T-cell (primary cell): ENCODE measurements at regions of chr2 and their contacts with region 1.

Region 1: GRCh38 chr2:174577967-174578589 is 19.5 kb downstream of the WIPF1 start:
- DNase-seq: peak in 34 of 35 experiments; percentile 35 to 82 (median 62)
- ATAC-seq: peak; percentile 67 to 78 (median 73)
- H3K4me3 ChIP-seq: no peak overlapping the region
- H3K4me3 Mint-ChIP-seq: no peak overlapping the region
- H3K27ac ChIP-seq: peak overlapping the region; percentile 16
- H3K27ac Mint-ChIP-seq: peak overlapping the region; percentile 59 to 68
- H3K4me1 ChIP-seq: peaks cover 3 to 48% of the 10 kb centered on the region in 2 experiments
- H3K4me1 Mint-ChIP-seq: peaks cover 76 to 83% (median 83%) of the 10 kb centered on the region in 3 donors
- H3K27me3 ChIP-seq: no peaks in the 10 kb centered on the region
- H3K27me3 Mint-ChIP-seq: no peaks in the 10 kb centered on the region

Region 2: DNA sequence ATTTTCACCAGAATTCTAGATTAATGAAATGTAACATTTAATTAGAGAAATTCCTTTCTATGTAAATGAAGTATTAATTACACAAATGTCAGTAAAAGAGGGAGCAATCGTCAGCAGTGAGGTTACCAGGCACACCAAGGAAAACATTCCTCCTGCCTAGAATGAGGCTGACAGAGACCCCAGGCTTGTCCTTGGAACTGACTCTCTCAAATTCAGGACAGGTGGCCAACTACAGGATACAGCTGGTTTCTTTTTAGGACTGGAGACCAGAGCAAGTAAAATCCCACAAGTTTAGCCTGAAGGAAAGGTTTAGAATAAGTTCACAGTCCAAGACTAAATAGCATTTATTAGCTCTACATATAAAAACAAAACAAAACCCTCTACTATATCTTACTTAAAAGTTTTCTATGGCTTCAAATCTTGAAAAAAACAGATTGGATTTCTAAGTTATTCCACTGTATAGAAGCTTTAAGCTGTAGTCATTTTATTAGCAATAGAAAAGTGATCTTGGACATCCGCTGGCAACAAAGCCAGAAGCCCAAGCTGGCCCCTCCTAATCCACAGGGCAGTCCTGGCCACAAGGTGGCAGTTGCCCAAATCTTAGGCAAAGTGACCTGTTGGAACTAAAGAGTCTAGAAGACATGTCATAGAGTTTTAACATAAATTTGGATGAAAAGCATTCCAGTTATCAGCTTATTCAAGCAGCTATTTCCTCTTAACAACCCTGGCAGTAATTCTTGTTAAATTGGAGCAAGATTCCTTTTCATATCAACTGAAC is 693.9 kb before region 1 on chr2:
- CTCF ChIA-PET with region 1: no interaction called
- POLR2A ChIA-PET with region 1: no interaction called
- DNase-seq: peak in 23 of 35 experiments; percentile 2 to 53 (median 20)
- ATAC-seq: peak in 1 of 4 experiments; percentile 40
- H3K4me3 ChIP-seq: no peak overlapping the region
- H3K4me3 Mint-ChIP-seq: no peak overlapping the region
- H3K27ac ChIP-seq: no peak overlapping the region
- H3K27ac Mint-ChIP-seq: no peak overlapping the region
- H3K4me1 ChIP-seq: no peaks in the 10 kb centered on the region
- H3K4me1 Mint-ChIP-seq: peaks cover 0 to 2% (median 0%) of the 10 kb centered on the region in 3 donors
- H3K27me3 ChIP-seq: peaks cover 0 to 4% of the 10 kb centered on the region in 2 experiments
- H3K27me3 Mint-ChIP-seq: peaks cover 18 to 23% of the 10 kb centered on the region in 2 donors

Region 3: DNA sequence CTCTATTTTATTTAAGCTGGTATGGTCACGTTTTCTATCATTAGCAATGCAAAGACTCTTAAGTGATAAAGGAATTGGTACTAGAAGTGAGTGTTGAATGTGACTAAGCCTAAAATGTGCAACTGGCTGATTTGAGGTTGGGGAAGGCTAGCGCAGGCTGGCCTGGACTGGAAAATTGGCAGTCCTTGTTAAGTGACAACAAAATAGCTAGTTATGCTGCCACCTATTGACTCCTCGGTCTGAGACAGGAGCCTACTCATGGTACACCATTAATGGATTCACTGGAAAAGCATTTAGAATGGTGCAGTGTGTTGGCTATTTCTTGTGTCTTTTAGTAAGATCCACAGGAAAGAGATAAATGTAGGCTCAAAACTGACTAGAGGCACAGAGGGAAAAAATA is 25.2 kb after region 1 on chr2:
- CTCF ChIA-PET with region 1: interaction called, 7 to 298 read pairs
- POLR2A ChIA-PET with region 1: interaction called, 5 to 13 read pairs
- DNase-seq: peak in 33 of 35 experiments; percentile 15 to 81 (median 41)
- ATAC-seq: peak; percentile 65 to 74 (median 70)
- H3K4me3 ChIP-seq: no peak overlapping the region
- H3K4me3 Mint-ChIP-seq: peak overlapping the region in 1 of 3 donors; percentile 15
- H3K27ac ChIP-seq: peak overlapping the region; percentile 89
- H3K27ac Mint-ChIP-seq: peak overlapping the region; percentile 91 to 93
- H3K4me1 ChIP-seq: peaks cover 50 to 69% of the 10 kb centered on the region in 2 experiments
- H3K4me1 Mint-ChIP-seq: peaks cover 88 to 98% (median 90%) of the 10 kb centered on the region in 3 donors
- H3K27me3 ChIP-seq: no peaks in the 10 kb centered on the region
- H3K27me3 Mint-ChIP-seq: no peaks in the 10 kb centered on the region

Region 4: DNA sequence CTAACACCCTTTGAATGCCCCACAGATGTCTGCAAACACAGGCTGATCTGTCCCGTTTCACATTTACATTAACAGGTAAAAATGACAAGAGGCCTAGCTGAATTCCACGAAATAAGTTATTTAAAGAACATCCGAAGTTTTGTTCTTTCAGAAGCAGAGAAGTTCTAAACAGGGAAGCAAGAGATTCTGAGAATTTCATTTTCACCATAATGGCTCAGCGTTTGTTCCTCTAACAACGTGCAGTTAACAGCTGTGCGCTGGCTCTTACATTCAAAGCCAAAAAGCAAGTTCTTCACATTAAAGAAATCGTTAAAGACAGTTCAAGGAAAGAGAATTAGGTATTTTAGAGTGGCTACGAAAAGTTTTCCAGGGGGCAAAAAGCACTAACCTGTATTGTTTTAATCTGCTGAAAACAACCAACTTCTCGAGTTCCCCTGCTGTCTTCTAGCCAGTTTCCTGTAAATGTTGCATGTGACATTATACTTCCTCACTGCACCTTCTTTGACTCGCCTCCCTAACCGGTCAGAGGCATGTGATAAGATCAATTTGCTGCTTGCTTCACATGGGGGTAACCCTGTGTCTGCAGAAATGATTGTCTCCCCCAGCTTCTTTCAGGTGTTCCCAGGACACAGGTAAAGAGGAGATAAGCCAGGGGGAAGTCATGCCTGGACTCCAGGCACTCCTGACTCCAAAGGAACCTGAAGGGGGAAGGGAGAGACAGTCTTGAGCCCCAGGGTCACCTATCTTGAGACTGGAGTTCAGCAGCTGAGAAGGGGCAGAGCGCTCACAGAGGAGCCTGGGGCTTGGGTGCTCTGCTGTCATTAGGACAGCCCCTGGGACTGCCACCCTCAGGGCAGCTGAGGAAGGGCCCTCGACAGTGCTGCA is 56.3 kb after region 1 on chr2:
- CTCF ChIA-PET with region 1: interaction called, 3 to 14 read pairs
- POLR2A ChIA-PET with region 1: no interaction called
- DNase-seq: peak in 33 of 35 experiments; percentile 12 to 75 (median 34)
- ATAC-seq: peak; percentile 73 to 83 (median 77)
- H3K4me3 ChIP-seq: peak overlapping the region; percentile 66 to 81
- H3K4me3 Mint-ChIP-seq: peak overlapping the region; percentile 87 to 93 (median 89)
- H3K27ac ChIP-seq: peak overlapping the region; percentile 94
- H3K27ac Mint-ChIP-seq: peak overlapping the region; percentile 93 to 99
- H3K4me1 ChIP-seq: peaks cover 30 to 46% of the 10 kb centered on the region in 2 experiments
- H3K4me1 Mint-ChIP-seq: peaks cover 60 to 83% (median 75%) of the 10 kb centered on the region in 3 donors
- H3K27me3 ChIP-seq: no peaks in the 10 kb centered on the region
- H3K27me3 Mint-ChIP-seq: no peaks in the 10 kb centered on the region

Region 5: GRCh38 chr2:174682578-174683391 is 104.7 kb after region 1 on chr2:
- CTCF ChIA-PET with region 1: interaction called, 54 to 55 read pairs
- POLR2A ChIA-PET with region 1: interaction called, 3 to 4 read pairs
- DNase-seq: peak; percentile 28 to 78 (median 53)
- ATAC-seq: peak; percentile 76 to 80 (median 79)
- H3K4me3 ChIP-seq: peak overlapping the region; percentile 72 to 81
- H3K4me3 Mint-ChIP-seq: peak overlapping the region; percentile 85 to 96 (median 92)
- H3K27ac ChIP-seq: peak overlapping the region; percentile 25
- H3K27ac Mint-ChIP-seq: peak overlapping the region; percentile 90 to 92
- H3K4me1 ChIP-seq: peaks cover 0 to 18% of the 10 kb centered on the region in 2 experiments
- H3K4me1 Mint-ChIP-seq: peaks cover 54 to 57% (median 55%) of the 10 kb centered on the region in 3 donors
- H3K27me3 ChIP-seq: no peaks in the 10 kb centered on the region
- H3K27me3 Mint-ChIP-seq: no peaks in the 10 kb centered on the region

Region 6: GRCh38 chr2:174688079-174688478 is 110.0 kb after region 1 on chr2:
- CTCF ChIA-PET with region 1: interaction called, 54 to 55 read pairs
- POLR2A ChIA-PET with region 1: interaction called in 1 of 2 experiments, 3 read pairs
- DNase-seq: peak in 1 of 35 experiments; percentile 68
- ATAC-seq: peak; percentile 50 to 62 (median 60)
- H3K4me3 ChIP-seq: no peak overlapping the region
- H3K4me3 Mint-ChIP-seq: no peak overlapping the region
- H3K27ac ChIP-seq: no peak overlapping the region
- H3K27ac Mint-ChIP-seq: peak overlapping the region; percentile 56 to 73
- H3K4me1 ChIP-seq: peaks cover 0 to 5% of the 10 kb centered on the region in 2 experiments
- H3K4me1 Mint-ChIP-seq: peaks cover 24 to 29% (median 26%) of the 10 kb centered on the region in 3 donors
- H3K27me3 ChIP-seq: peaks cover 0 to 8% of the 10 kb centered on the region in 2 experiments
- H3K27me3 Mint-ChIP-seq: no peaks in the 10 kb centered on the region